ENCODE measurements at regions of chr20 and their contacts with region 1.

Region 1: DNA sequence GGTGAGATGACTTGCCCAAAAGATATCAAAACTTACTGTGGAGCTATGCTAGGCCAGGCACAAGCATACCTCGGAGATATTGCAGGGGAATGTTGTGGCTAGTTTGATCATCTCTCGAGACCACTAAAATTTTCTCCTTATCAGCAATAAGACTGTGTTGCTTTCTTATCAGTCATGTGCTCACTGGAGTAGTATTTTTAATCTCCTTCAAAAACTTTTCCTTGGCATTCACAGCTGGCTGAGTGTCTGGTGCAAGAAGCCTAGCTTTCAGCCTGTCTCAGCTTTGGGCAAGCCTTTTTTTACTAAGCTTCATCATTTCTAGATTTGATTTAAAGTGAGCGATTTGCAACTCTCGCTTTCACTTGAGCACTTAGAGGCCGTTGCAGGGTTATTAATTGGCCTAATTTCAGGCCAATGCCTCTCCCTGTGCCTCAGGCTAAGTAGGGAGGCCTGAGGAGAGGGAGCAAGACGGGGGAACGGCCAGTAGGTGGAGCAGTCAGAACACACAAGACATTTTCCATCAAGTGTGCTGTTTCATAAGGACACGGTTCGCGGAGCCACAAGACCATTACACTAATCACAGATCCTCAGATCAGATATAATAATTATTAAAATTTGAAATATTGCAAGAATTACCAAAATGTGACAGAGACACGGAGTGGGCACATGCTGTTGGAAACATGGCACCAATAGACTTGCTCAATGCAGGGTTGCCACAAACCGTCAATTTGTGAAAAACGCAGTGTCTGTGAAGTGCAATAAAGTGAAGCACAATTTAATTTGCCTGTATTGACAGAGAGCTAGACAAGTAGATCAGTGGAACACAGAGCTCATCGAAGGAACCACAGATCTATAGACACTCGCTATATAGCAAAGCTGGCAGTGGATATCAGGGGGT is 106.8 kb upstream of the SIRPG start:
- DNase-seq: peak; percentile 80 to 85
- ATAC-seq: peak; percentile 95 to 98
- H3K4me3 ChIP-seq: no peak overlapping the region
- H3K27ac ChIP-seq: no peak overlapping the region
- H3K4me1 ChIP-seq: peaks cover 11% of the 10 kb centered on the region
- CTCF ChIP-seq: peak; percentile 88
- EP300 ChIP-seq: no peak
- POLR2A ChIP-seq: no peak
- RAD21 ChIP-seq: peak; percentile 87 to 91

Region 2: DNA sequence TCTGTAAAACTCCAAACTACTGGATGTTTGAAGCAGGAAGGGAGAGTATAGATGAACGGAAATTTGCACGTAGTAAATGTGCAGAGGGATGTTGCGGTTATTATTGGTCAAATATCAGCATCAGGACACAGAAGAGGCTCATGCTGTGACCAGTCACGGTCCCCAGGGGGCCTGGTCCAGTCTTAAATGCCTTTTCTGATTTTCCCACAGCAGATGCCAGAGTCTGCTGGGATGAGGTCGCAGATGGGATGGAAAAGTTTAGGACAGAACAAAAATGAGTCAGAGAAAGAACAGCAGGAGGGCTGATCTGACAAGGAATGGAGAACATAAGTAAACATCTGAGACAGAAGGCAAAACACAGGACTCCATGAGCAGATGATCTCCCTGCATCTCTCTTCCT is 95.1 kb before region 1 on chr20:
- CTCF ChIA-PET with region 1: no interaction called
- POLR2A ChIA-PET with region 1: no interaction called
- DNase-seq: peak; percentile 7 to 21
- ATAC-seq: peak in 1 of 2 experiments; percentile 47; a peak in 1 of 6 replicates
- H3K4me3 ChIP-seq: no peak overlapping the region
- H3K27ac ChIP-seq: no peak overlapping the region
- H3K4me1 ChIP-seq: no peaks in the 10 kb centered on the region
- CTCF ChIP-seq: no peak
- EP300 ChIP-seq: no peak
- POLR2A ChIP-seq: no peak
- RAD21 ChIP-seq: no peak

Region 3: DNA sequence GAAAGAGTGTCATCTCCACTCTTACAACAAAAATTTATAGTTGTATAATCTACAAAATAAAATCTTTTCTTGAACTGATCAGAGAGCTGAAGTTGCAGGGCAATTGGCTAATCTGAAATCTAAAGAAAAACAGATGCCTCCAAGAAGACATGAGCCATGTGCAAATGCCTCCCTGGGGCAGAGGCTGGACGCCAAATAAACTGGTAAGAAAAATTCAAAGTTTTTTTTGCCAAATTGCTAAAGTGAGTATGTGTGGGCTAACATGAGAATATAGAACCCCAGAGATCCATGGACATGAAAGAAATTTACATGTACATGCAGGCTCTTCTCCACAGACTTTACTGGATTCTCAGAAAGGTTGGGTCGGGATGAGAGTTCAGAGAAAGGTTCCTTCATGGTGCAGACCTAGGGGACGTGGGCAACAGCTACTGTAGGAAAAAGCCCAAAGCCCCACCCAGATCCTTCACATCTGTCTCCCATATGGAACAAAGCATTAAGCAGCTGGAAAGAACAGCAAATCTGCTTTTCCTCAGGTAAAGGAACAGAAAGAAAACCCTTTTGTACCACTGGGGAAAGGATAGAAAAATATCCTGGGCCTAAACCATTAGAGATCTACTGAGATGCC is 16.3 kb before region 1 on chr20:
- CTCF ChIA-PET with region 1: interaction called, 28 read pairs
- POLR2A ChIA-PET with region 1: no interaction called
- DNase-seq: no peak
- ATAC-seq: no peak
- H3K4me3 ChIP-seq: no peak overlapping the region
- H3K27ac ChIP-seq: no peak overlapping the region
- H3K4me1 ChIP-seq: no peaks in the 10 kb centered on the region
- CTCF ChIP-seq: no peak
- EP300 ChIP-seq: no peak
- POLR2A ChIP-seq: no peak
- RAD21 ChIP-seq: no peak

Region 4: GRCh38 chr20:1810926-1811620 is 46.7 kb after region 1 on chr20:
- CTCF ChIA-PET with region 1: interaction called, 10 read pairs
- POLR2A ChIA-PET with region 1: no interaction called
- DNase-seq: no peak
- ATAC-seq: peak in 1 of 2 experiments; percentile 6; a peak in 2 of 6 replicates
- H3K4me3 ChIP-seq: no peak overlapping the region
- H3K27ac ChIP-seq: peak overlapping the region; percentile 85 to 87
- H3K4me1 ChIP-seq: peaks cover 74% of the 10 kb centered on the region
- CTCF ChIP-seq: no peak
- EP300 ChIP-seq: no peak
- POLR2A ChIP-seq: no peak
- RAD21 ChIP-seq: no peak

Region 5: DNA sequence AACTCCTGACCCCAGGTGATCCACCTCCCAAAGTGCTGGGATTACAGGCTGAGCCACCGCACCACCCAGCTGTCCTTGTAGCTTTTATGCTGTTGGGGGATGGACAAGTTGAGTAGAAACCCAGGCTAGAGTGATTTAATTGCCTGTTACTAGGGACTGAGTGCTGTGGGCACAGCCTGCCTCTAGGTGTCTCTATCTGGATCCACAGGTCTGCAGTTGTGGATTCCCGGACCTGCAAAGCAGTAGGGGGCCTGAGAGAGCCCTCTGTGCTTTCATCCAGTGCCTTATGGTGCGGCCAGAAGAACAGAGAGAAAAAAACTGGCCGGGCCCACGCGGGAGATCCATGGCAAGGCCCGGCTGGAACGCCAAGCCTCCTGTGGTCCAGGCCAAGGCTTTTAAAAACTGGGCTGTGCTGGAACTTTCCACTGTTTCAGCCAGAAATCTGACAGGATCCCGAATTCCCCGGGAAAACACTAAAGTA is 136.0 kb after region 1 on chr20:
- CTCF ChIA-PET with region 1: interaction called, 12 read pairs
- POLR2A ChIA-PET with region 1: no interaction called
- DNase-seq: peak; percentile 89 to 98
- ATAC-seq: peak; percentile 95 to 99
- H3K4me3 ChIP-seq: no peak overlapping the region
- H3K27ac ChIP-seq: peak overlapping the region in 1 of 2 experiments; percentile 56; a peak in 2 of 6 replicates
- H3K4me1 ChIP-seq: peaks cover 37% of the 10 kb centered on the region
- CTCF ChIP-seq: peak; percentile 80
- EP300 ChIP-seq: no peak
- POLR2A ChIP-seq: no peak
- RAD21 ChIP-seq: peak; percentile 67 to 69

Region 6: DNA sequence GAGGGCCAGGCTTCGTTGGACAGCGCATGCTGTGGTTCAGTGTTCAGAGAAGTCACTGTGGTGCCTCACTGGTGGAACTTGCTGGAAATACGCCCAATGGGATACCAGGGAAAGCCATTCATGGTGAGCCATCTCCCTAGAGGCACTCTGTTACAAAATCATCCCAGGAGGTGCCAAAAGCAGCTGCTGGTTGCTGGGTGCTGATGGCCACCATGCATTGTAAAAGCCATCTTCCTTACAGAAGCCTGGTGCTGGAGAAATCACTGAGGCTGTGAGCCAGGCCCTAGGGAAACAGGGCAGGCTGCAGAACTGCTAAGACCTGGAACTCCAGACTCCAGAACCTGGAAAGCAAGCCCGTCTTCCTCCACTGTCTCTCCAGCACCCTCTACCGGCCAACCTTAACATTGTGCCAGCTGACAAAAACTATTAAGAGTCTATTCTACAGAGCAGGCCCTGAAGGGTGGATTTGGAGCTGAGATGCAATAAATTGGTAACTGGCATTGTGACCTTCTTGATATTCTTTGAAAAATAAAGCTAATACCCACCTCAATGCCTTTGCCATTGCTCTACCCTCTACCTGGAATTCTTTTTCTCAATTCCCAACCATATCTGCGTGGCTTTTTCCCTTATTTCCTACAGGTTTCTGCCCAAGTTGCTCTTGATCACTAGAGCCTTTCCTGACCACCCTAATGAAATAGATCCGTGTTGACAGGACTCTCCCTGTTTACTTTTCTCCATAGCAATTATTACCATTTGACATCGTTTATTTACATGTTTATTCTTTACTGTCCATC is 687.8 kb after region 1 on chr20:
- CTCF ChIA-PET with region 1: interaction called, 11 read pairs
- POLR2A ChIA-PET with region 1: no interaction called
- DNase-seq: peak; percentile 81 to 82
- ATAC-seq: peak; percentile 74 to 88
- H3K4me3 ChIP-seq: no peak overlapping the region
- H3K27ac ChIP-seq: no peak overlapping the region
- H3K4me1 ChIP-seq: no peaks in the 10 kb centered on the region
- CTCF ChIP-seq: peak; percentile 85
- EP300 ChIP-seq: no peak
- POLR2A ChIP-seq: no peak
- RAD21 ChIP-seq: peak; percentile 75 to 88

Measured in A549 (cell line).